Lower leg skin (tissue), 4 donors: ENCODE measurements at regions of chr22 and their contacts with region 1.

Region 1: DNA sequence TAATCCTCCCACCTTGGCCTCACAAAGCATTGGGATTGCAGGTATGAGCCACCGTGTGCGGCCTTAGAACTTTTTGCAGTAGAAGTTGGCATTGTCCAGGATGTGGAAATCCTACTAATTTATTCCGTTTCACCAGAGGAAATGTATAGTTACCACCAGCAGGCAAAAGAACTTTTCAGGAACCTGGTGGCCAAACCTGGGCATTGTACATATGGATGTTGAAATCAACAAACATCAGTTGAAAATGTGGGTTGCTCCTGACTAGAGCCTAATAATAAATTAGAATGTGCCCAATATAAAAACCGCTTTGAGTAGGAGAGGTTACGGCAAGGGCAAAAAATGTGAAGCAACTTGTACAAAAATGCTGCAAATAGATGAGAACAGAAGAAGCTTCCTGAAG is 40.7 kb upstream of the XBP1 start:
- DNase-seq: no peak
- H3K4me3 ChIP-seq: no peak overlapping the region
- CTCF ChIP-seq: no peak
- POLR2A ChIP-seq: no peak

Region 2: GRCh38 chr22:28171115-28171514 is 670.0 kb before region 1 on chr22:
- intact Hi-C with region 1: no loop called
- DNase-seq: no peak
- H3K4me3 ChIP-seq: no peak overlapping the region
- CTCF ChIP-seq: no peak
- POLR2A ChIP-seq: no peak

Region 3: DNA sequence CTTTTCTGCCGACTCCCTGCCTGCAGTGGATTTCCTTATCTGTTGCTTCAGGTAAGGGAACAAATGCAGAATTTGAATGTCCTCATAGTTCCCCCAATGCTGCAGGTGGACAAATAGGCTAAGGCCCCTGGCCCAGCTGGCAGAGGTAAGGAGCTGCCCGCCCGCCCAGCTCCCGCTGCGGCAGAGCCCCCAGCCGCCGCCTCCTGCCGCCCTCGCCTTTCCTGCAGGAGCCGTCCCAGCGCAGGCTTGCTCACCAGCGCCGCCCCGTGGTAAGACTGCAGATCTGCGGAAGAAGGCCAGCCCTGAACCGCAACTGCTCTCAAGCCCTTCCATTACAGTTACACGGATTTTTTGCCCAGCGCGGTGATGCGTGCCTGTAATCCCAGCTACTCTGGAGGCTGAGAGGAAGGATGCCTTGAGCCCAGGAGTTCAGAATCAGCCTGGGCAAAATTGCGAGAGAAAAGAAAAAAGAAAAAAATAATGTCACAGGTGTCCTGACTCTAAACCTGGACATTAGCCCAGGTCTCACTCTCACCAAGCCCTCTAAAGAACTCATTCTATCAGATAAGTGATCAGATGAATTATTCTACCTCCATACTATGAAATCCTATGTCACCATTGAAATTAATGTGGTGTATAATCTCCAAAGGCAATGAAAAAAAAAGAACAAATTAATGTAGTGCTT is 313.4 kb after region 1 on chr22:
- intact Hi-C with region 1: loop called (anchors 10 kb)
- DNase-seq: peak; percentile 38 to 95
- H3K4me3 ChIP-seq: no peak overlapping the region
- CTCF ChIP-seq: peak in 1 of 3 donors; percentile 9
- POLR2A ChIP-seq: no peak